ENCODE measurements at regions of chrX and their contacts with region 1.

Region 1: DNA sequence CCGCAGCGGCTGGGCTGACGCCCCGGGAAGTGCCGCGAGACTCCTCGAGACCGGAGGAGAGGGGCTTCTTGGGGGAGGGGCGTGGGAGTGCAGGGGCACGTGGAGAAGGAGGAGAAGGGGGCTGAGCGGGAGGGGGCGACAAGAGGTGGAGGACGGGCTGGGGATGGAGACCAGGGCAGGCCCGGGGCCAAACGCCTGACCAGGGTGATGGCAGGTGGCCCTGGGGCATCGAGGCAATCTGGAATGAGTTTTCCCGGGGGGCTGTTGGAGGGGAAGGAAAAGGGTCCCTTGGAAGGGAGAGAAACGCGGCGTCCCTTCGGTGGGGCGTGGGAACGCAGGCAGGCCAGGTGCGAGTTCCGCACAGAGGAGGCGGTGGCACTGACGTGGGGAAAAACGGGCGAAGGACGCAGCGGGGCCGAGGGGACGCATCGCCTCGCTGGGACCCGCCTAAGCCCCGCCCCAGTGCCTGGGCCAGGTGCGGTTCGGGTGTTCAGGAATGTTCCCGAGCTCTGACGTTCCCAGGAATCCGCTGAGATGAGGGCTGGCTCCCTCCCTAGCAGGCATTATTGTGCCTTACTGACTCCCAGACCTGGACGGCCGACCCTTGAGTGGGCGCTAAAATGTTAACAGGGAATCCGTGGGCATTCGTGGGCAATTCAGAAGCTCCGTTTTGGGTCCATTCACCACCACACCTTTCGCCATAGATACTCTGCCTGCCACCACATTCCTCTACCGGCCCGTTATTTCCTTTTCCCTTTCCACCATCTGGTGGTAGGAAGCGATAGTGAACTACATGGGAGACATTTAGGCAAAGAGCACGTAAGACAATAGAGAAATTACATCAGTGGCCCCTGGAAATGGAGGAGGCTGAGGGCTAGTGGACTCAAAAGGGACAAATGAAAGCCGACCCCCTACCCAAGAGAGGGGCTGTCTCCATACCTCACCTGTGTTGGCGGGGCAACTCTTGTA is 795 bp upstream of the SH3KBP1 start:
- DNase-seq: peak; percentile 55
- ATAC-seq: peak; percentile 24
- H3K4me3 Mint-ChIP-seq: peak overlapping the region; percentile 80
- H3K27ac Mint-ChIP-seq: peak overlapping the region; percentile 67
- H3K4me1 Mint-ChIP-seq: peaks cover 31% of the 10 kb centered on the region
- H3K27me3 Mint-ChIP-seq: peaks cover 3% of the 10 kb centered on the region

Region 2: GRCh38 chrX:20015945-20016615 is 127.9 kb after region 1 on chrX:
- POLR2A ChIA-PET with region 1: interaction called, 10 read pairs
- DNase-seq: no peak
- ATAC-seq: no peak
- H3K4me3 Mint-ChIP-seq: no peak overlapping the region
- H3K27ac Mint-ChIP-seq: no peak overlapping the region
- H3K4me1 Mint-ChIP-seq: no peaks in the 10 kb centered on the region
- H3K27me3 Mint-ChIP-seq: no peaks in the 10 kb centered on the region